Activated CD8-positive, alpha-beta T cell treated with anti-CD3 and anti-CD28 coated beads, Interleukin-2, amount 10 ng/mL, durations not matched to agents 7 days and 5 days (primary cell): ENCODE measurements at regions of chr9 and their contacts with region 1.

Region 1: DNA sequence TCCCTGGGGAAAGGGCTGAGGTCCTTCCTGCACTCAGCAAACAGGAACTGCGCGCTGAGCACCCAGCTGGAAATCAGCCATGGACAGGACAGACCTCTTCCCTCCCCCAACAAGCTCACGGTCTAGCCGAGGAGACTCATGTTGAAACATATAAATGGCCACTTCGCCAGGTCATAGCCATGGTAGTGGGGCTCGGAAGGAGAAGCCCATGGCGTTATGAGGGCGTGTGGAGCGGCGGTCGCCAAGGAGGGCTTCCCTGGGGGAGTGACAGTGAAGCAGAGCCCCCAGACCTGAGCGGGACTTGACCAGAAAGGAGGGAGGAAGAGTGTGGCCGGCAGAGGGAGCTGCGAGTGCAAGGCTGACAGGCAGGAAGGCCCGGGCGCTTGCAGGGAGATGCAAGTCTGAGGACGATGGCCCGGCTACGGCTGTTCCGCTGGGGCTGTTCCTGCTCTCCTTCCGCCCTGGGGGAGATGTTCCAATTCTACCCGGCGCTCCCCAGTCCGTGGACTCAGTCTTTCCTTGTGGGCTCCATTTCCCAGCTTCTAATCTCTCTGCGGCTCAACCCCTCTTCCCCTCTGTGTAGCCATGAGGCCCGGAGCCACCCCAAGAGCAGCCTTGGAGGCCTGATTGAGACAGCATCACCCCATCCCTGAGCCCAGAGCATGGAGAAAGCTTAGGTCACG is 43.9 kb upstream of the PRRC2B start:
- DNase-seq: peak; percentile 93
- ATAC-seq: peak; percentile 99
- H3K4me3 Mint-ChIP-seq: peak overlapping the region; percentile 30
- H3K27ac Mint-ChIP-seq: peak overlapping the region; percentile 54
- H3K4me1 Mint-ChIP-seq: peaks cover 14% of the 10 kb centered on the region
- H3K27me3 Mint-ChIP-seq: no peaks in the 10 kb centered on the region

Region 2: DNA sequence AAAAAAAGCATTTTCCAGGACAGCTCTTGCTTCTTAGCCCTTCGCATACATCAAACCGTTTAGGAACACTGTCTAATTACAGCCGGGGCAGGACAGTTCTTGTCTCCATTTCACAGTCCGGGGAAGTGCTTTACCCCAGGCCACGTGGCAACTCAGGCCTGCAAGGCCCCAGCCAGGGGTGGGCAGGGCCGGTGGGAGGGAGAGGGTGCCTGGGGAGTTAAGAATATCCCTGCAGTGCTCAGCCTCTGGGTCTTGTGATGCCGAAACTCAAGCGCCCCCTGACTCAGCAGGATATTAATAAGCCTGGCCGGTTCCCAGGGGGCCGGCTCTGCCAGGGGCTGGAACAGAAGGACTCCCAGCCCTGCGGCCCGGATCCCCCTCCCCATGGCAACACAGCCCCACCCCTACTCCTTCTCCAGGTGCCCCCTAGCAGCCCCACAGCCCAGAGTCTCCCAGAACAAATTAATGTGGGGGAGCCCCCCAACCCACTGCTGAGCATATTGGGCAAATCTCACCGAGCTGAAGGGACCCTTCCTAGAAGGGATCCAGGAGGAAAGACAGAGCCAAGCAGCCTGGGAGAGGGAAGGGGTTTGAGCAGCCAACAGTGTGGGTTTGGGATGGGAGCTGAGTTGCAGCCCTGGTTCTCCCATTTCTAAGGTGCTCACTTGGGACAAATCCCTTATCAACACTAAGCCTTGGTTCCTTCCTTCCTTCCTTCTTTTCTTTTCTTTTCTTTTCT is 15.2 kb before region 1 on chr9:
- CTCF ChIA-PET with region 1: interaction called, 16 read pairs
- POLR2A ChIA-PET with region 1: interaction called, 3 read pairs
- DNase-seq: no peak
- ATAC-seq: no peak
- H3K4me3 Mint-ChIP-seq: no peak overlapping the region
- H3K27ac Mint-ChIP-seq: no peak overlapping the region
- H3K4me1 Mint-ChIP-seq: peaks cover 7% of the 10 kb centered on the region
- H3K27me3 Mint-ChIP-seq: peaks cover 3% of the 10 kb centered on the region

Region 3: DNA sequence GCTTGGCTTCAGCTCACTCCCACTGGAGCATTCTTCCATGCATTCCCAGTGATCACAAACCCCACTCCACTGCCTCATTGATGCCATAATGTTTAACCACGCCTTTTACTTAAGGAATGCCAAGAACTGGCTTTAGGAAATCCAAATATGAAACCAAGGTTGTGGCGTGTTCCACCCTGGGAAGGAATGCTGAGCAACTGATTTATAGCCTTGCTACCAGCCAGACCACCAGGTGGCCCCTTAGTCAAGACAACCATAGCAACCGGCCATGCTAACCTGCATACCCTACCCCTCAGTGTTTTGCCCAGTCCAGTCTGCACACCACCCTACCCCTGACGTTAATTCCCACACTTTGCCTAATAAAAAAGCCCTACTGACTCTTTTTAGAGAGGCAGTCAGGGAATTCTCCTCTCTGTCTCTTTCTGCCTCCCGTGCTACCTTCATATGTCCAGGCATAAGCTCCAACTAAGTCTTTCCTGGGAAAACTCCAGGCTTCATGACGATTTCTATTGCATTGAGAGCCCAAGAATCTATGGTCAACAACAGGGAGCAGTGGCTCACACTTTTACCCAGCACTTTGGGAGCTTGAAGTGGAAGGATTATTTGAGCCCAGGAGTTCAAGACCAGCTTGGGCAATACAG is 16.9 kb after region 1 on chr9:
- CTCF ChIA-PET with region 1: interaction called, 29 read pairs
- POLR2A ChIA-PET with region 1: no interaction called
- DNase-seq: no peak
- ATAC-seq: no peak
- H3K4me3 Mint-ChIP-seq: no peak overlapping the region
- H3K27ac Mint-ChIP-seq: no peak overlapping the region
- H3K4me1 Mint-ChIP-seq: peaks cover 1% of the 10 kb centered on the region
- H3K27me3 Mint-ChIP-seq: no peaks in the 10 kb centered on the region

Region 4: DNA sequence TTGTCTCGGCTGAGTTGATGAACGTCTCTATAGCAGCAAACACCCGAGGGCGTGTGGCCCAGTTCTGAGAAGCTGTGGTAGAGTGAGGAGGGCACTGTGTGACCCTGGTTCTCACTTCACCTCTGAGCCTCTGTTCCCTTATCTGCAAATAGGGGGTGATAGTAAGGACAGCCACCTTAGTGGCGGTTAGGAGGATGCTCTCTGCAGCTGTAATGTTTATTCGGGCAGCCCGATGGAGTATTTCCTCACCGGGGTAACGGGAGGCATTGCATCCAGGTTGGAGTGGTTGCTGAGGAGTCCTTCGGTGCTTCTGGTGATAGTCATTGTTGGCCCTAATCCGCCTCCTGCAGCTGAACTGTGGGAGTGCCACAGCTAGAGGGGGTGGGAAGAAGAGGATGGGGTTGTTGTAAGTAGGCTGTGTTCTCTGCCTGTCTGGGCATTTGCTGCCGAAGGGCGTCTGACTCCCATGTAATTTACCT is 57.7 kb after region 1 on chr9:
- CTCF ChIA-PET with region 1: interaction called, 30 read pairs
- POLR2A ChIA-PET with region 1: interaction called, 4 read pairs
- DNase-seq: peak; percentile 69
- ATAC-seq: peak; percentile 74
- H3K4me3 Mint-ChIP-seq: peak overlapping the region; percentile 76
- H3K27ac Mint-ChIP-seq: peak overlapping the region; percentile 76
- H3K4me1 Mint-ChIP-seq: peaks cover 85% of the 10 kb centered on the region
- H3K27me3 Mint-ChIP-seq: no peaks in the 10 kb centered on the region

Region 5: GRCh38 chr9:131478421-131478868 is 128.4 kb after region 1 on chr9:
- CTCF ChIA-PET with region 1: interaction called, 21 read pairs
- POLR2A ChIA-PET with region 1: no interaction called
- DNase-seq: peak; percentile 67
- ATAC-seq: peak; percentile 67
- H3K4me3 Mint-ChIP-seq: no peak overlapping the region
- H3K27ac Mint-ChIP-seq: no peak overlapping the region
- H3K4me1 Mint-ChIP-seq: no peaks in the 10 kb centered on the region
- H3K27me3 Mint-ChIP-seq: no peaks in the 10 kb centered on the region

Region 6: DNA sequence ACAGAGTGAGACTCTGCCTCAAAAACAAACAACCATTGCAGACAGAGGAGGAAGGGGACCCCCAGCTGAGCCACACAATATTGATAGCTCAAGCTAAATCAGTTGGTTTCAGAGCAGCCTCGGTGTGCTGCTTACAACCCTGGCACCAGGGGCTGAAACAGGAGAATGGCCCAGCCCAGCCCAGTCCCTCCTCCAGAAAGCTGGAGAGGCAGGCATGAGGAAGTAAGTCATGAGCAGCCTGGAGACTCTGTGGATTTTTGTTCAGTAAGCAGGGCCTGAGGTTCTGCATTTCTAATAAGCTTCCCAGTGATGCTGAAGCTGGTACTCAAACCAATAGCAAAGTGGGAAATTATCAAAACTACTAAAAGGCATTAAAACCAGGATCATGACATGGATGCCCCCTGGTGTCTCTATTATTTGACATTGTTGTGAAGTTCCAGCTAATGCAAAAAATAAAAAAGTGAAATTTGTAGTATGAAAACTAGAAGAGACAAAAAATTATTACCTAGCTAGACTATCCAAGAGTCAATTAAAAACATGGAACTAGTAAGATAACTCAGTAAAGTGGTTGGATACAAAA is 209.5 kb after region 1 on chr9:
- CTCF ChIA-PET with region 1: interaction called, 17 read pairs
- POLR2A ChIA-PET with region 1: no interaction called
- DNase-seq: no peak
- ATAC-seq: no peak
- H3K4me3 Mint-ChIP-seq: no peak overlapping the region
- H3K27ac Mint-ChIP-seq: no peak overlapping the region
- H3K4me1 Mint-ChIP-seq: peaks cover 4% of the 10 kb centered on the region
- H3K27me3 Mint-ChIP-seq: peaks cover 19% of the 10 kb centered on the region